Caco-2 (cell line): ENCODE measurements at regions of chr5 and their contacts with region 1.

Region 1: DNA sequence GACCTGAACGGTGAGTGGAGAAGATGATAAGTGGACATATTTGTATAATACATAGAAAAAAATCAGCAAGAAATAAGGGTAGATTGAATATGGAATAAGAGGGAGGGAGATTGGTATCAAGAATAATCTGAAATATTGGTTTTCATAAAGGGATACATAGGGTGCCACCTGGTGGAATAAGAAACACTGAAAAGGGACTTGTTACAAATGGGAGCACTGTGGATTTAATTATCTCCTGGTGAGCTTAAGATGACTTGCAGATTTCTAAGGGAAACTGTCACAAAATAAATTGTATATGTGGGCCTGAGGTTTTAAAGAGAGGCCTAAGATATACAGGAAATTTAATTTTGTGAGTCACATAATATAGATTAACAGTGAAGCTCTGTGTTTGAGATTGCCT is 1403.5 kb upstream of the CDH18 start:
- DNase-seq: no peak
- H3K4me3 ChIP-seq: no peak overlapping the region
- H3K4me3 Mint-ChIP-seq: no peak overlapping the region
- H3K27ac Mint-ChIP-seq: no peak overlapping the region
- H3K4me1 ChIP-seq: no peaks in the 10 kb centered on the region
- H3K4me1 Mint-ChIP-seq: no peaks in the 10 kb centered on the region
- H3K27me3 ChIP-seq: no peaks in the 10 kb centered on the region
- H3K27me3 Mint-ChIP-seq: peaks cover 3% of the 10 kb centered on the region
- CTCF ChIP-seq: no peak

Region 2: DNA sequence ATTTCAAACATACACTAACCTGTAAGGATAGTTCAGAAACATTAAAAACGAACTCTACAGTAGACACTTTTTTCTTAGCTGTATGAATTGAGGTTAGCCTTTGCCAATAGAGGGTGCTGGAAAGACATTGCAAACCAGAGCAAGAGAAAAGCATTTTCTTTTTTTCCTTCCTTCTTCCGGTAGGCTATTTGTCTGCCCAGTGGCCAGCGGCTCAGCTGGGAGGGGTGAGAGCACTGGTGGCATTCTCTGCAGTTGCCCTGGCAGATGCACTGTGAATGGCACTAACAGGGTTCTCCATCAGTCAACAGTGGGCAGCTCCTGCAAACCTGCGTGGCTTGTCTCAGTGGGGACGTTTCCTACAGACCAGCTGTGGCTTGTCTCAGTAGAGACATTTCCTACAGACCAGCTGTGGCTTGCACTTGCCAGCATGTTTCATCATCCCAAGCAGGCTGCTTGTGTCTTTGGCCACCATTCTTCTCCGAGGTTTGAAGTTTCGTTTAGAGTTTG is 419.0 kb before region 1 on chr5:
- CTCF ChIA-PET with region 1: interaction called, 5 read pairs
- POLR2A ChIA-PET with region 1: no interaction called
- intact Hi-C with region 1: loop called (anchors 1 kb)
- DNase-seq: peak; percentile 30 to 32
- H3K4me3 ChIP-seq: peak overlapping the region; percentile 8; the same call in 1 of the 2 replicates
- H3K4me3 Mint-ChIP-seq: peak overlapping the region; percentile 62
- H3K27ac Mint-ChIP-seq: no peak overlapping the region
- H3K4me1 ChIP-seq: no peaks in the 10 kb centered on the region
- H3K4me1 Mint-ChIP-seq: no peaks in the 10 kb centered on the region
- H3K27me3 ChIP-seq: no peaks in the 10 kb centered on the region
- H3K27me3 Mint-ChIP-seq: no peaks in the 10 kb centered on the region
- CTCF ChIP-seq: peak; percentile 25 to 51

Region 3: GRCh38 chr5:21212026-21212425 is 179.5 kb before region 1 on chr5:
- CTCF ChIA-PET with region 1: no interaction called
- POLR2A ChIA-PET with region 1: no interaction called
- intact Hi-C with region 1: no loop called
- DNase-seq: no peak
- H3K4me3 ChIP-seq: no peak overlapping the region
- H3K4me3 Mint-ChIP-seq: no peak overlapping the region
- H3K27ac Mint-ChIP-seq: no peak overlapping the region
- H3K4me1 ChIP-seq: no peaks in the 10 kb centered on the region
- H3K4me1 Mint-ChIP-seq: no peaks in the 10 kb centered on the region
- H3K27me3 ChIP-seq: no peaks in the 10 kb centered on the region
- H3K27me3 Mint-ChIP-seq: peaks cover 4% of the 10 kb centered on the region
- CTCF ChIP-seq: no peak

Region 4: DNA sequence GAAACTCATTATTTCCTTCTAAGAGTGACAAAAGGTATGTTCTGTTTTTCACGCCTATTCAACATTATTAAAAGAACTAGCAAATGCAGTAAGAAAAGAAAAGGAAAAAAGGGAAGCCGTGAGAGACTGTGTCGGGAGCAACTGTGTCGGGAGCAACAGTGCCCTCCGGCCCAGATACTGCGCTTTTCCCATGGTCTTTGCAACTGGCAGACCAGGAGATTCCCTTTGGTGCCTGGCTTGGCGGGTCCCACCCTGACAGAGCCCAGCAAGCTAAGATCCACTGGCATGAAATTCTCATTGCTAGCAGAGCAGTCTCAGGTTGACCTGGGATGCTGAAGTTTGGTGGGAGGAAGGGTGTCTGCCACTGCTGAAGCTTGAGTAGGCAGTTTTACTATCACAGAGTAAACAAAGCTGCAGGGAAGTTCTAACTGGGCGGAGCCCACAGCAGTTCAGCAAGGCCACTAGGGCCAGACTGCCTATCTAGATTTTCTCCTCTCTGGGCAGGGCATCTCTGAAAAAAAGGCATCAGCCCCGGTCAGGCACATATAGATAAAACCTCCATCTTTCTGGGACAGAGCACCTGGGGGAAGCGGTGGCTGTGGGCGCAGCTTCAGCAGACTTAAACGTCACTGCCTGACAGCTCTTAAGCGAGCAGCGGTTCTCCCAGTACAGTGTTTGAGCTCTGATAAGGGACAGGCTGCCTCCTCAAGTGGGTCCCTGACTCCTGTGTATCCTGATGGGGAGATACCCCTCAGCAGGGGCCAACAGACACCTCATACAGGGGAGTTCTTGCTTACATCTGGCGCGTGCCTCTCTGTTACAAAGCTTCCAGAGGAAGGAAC is 166.1 kb before region 1 on chr5:
- CTCF ChIA-PET with region 1: no interaction called
- POLR2A ChIA-PET with region 1: no interaction called
- intact Hi-C with region 1: no loop called
- DNase-seq: peak; percentile 15 to 36
- H3K4me3 ChIP-seq: no peak overlapping the region
- H3K4me3 Mint-ChIP-seq: no peak overlapping the region
- H3K27ac Mint-ChIP-seq: no peak overlapping the region
- H3K4me1 ChIP-seq: peaks cover 8% of the 10 kb centered on the region
- H3K4me1 Mint-ChIP-seq: no peaks in the 10 kb centered on the region
- H3K27me3 ChIP-seq: no peaks in the 10 kb centered on the region
- H3K27me3 Mint-ChIP-seq: no peaks in the 10 kb centered on the region
- CTCF ChIP-seq: no peak

Region 5: DNA sequence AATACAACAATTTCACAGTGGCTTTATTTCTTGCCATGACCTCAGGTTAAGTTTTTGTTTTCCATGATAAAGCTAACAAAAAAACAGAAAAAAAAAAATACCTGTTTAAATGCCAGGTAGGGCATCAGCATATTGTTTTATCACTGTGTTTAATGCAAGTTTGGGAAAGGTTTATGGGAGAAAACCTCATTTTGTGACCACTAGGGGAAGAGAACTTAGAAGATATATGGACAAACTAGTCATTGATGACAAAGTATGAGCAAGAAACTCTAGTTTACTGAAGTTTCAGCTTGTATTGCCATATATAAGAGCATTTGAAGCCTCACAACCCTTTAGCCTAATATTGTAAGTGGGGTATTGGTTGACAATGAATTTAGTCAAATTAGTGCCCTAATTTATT is 27.9 kb after region 1 on chr5:
- CTCF ChIA-PET with region 1: no interaction called
- POLR2A ChIA-PET with region 1: no interaction called
- intact Hi-C with region 1: no loop called
- DNase-seq: no peak
- H3K4me3 ChIP-seq: no peak overlapping the region
- H3K4me3 Mint-ChIP-seq: no peak overlapping the region
- H3K27ac Mint-ChIP-seq: no peak overlapping the region
- H3K4me1 ChIP-seq: no peaks in the 10 kb centered on the region
- H3K4me1 Mint-ChIP-seq: peaks cover 5% of the 10 kb centered on the region
- H3K27me3 ChIP-seq: no peaks in the 10 kb centered on the region
- H3K27me3 Mint-ChIP-seq: no peaks in the 10 kb centered on the region
- CTCF ChIP-seq: peak in 1 of 2 experiments; percentile 5